Spleen (tissue), 13 donors: ENCODE measurements at regions of chr13 and their contacts with region 1.

Region 1: DNA sequence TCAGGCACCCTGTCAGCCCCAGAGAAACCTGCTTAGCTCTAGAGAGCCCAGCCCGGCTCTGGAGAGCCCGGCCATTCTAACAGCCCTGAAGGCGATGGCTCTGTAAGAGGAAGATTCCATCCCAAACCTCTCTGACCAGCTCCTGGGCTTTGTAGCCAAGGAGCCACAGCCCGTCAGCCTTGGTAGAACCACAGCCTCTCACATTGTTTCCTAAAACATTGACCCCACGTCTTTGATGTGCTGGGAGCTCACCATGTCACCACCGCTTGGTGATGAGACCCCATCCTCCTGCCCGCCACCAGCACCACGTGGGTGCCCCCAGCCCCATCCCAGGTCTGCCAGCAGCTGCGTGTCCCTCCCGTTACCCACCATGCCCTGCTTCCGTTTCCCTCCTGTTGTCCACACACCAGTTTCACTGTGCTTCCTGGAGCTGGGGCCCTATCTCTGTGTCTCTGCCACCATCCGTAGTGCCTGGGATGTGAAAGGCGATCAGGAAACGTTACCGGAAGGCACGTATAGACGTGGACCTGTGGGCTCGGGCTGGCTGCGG is 94.2 kb upstream of the MCF2L start:
- DNase-seq: peak; percentile 75
- H3K4me3 ChIP-seq: peak overlapping the region in 3 of 8 donors; percentile 8 to 63 (median 13)
- H3K27ac ChIP-seq: peak overlapping the region in 7 of 8 donors; percentile 59 to 86 (median 77)
- H3K4me1 ChIP-seq: peaks cover 9 to 37% (median 24%) of the 10 kb centered on the region in 6 donors
- H3K27me3 ChIP-seq: no peaks in the 10 kb centered on the region
- CTCF ChIP-seq: peak in 4 of 11 experiments; percentile 13 to 55 (median 24)
- POLR2A ChIP-seq: no peak

Region 2: DNA sequence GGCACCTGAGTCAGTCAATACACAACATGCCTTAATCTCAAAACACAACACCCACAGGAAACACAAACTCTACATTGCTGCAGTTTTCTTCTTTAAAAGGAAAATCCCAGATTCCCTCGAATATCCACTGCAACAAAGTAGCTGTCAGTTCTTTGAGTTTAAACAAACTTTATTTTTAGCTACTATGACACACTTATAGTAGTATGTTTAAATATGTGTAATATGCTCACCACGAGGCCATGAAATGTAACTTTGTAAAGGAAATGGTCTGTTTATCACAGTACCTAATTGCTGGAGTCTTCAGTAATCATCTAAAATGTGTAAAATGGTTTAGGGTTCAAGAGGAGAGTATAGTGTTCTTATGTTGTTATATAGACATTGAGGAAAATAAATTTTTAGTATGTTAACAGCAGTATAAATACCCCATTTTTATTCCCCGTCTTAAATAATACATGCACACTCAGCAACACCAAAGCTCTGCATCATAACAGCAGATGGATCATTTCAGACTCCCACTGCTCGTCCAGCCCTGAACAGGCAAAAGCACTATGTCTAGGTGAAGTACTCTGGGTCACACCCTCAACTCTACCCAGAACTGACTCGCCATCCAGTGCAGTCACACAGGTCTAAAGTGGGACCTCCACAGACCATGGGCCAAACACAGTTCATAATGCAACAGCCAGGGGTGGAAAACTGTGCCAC is 307.5 kb before region 1 on chr13:
- intact Hi-C with region 1: no loop called
- DNase-seq: no peak
- H3K4me3 ChIP-seq: no peak overlapping the region
- H3K27ac ChIP-seq: no peak overlapping the region
- H3K4me1 ChIP-seq: peaks cover 0 to 38% (median 19%) of the 10 kb centered on the region in 6 donors
- H3K27me3 ChIP-seq: no peaks in the 10 kb centered on the region
- CTCF ChIP-seq: no peak
- POLR2A ChIP-seq: no peak

Region 3: DNA sequence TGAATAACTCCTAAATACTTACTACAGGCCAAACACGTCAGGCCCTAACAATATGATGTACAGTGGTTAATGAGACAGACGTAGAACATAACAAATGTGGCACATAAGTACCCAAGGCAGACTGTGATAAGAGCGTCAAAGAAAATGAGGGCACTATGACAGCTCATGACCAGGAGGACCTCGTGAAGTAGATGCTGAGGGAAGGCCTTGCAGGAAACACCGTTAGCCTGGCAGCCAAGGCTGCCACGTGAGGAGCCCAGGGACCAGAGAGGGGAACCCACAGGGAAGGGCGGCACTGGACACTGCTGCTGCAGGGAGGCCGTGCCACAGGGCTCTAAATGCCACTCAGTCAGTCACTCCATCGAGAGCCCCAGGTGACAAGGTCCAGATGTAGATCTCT is 292.6 kb before region 1 on chr13:
- intact Hi-C with region 1: no loop called
- DNase-seq: no peak
- H3K4me3 ChIP-seq: no peak overlapping the region
- H3K27ac ChIP-seq: peak overlapping the region in 6 of 8 donors; percentile 68 to 88 (median 82)
- H3K4me1 ChIP-seq: peaks cover 13 to 86% (median 54%) of the 10 kb centered on the region in 6 donors
- H3K27me3 ChIP-seq: no peaks in the 10 kb centered on the region
- CTCF ChIP-seq: no peak
- POLR2A ChIP-seq: no peak

Region 4: DNA sequence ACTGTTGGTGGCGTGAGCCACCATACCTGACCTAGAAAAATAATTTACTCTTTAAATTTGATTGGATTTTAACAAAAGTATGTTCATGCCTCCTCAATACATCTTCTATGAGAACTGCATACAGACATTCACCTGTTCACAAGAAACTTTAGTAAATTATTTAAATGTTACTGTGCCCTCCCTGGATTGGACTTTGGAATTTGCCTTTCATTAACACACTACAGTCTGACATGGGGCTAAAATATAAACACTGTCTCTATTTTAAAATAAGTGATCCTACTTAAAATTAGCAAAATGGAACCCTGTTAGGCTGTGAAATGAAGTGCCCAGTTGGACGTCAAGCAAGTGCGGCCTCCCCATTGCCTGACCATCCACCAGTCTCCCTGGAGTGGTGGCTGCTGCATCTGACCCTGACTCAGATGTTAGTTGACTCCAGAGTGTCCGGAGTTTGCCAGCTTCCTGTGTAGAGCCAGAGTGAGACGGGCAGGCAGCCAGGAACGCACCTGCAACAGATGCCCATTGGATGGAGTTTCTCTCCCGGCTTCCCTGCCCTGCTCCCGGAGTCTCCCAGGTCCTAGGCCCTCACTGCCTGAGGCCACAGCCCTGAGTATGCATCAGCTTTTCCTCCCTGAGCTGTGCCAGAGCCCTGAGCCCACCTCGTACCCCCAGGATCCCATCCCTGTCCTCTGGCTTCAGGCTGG is 230.9 kb before region 1 on chr13:
- intact Hi-C with region 1: loop called (anchors 5 kb)
- DNase-seq: peak; percentile 29
- H3K4me3 ChIP-seq: no peak overlapping the region
- H3K27ac ChIP-seq: no peak overlapping the region
- H3K4me1 ChIP-seq: peaks cover 0 to 16% (median 8%) of the 10 kb centered on the region in 6 donors
- H3K27me3 ChIP-seq: peaks cover 0 to 35% (median 10%) of the 10 kb centered on the region in 7 donors
- CTCF ChIP-seq: no peak
- POLR2A ChIP-seq: no peak